PC-3 (cell line): ENCODE measurements at regions of chr17 and their contacts with region 1.

Region 1: GRCh38 chr17:12041316-12041715 is 20.6 kb downstream of the MAP2K4 start:
- DNase-seq: peak; percentile 96
- ATAC-seq: peak; percentile 84
- H3K4me3 ChIP-seq: peak overlapping the region; percentile 28
- H3K27ac ChIP-seq: peak overlapping the region; percentile 65
- H3K4me1 ChIP-seq: peaks cover 34% of the 10 kb centered on the region
- H3K27me3 ChIP-seq: no peaks in the 10 kb centered on the region
- CTCF ChIP-seq: no peak

Region 2: DNA sequence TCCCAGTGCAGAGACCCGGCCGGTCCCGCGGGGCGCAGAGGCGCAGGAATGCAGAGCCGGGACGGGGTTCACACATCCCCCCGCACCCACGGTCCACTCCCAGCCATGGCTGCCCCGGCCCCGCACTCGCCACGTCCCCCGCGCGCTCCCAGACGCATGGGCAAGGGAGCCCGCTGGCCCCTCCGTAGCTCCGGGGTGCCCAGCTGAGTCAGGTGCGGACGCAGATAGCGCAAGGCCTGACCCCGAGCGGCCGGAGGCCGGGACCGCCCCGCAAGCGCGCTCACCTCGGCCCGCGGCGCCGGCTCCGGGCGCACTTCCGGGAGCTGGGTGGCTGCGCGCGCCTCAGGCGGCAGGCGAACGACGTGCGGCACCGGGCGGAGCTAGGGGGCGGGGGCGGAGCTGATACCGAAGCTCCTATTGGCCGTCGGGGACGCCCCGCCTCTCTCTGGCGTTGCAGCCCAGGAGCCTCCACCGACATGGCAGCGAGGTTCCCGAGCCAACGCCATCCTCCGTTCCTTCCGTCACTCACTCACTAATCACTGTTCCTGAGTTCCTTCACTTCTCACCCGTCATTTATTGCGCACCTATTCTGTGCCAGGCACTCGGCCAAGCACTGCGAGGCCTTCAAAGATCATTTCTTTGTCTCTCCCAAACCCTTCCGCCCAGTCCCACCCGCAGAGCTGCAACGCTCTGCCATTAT is 44.0 kb before region 1 on chr17 and contains the start of gene ZNF18:
- CTCF ChIA-PET with region 1: no interaction called
- POLR2A ChIA-PET with region 1: interaction called, 3 read pairs
- intact Hi-C with region 1: loop called (anchors 5 kb)
- DNase-seq: peak; percentile 98
- ATAC-seq: peak; percentile 95
- H3K4me3 ChIP-seq: peak within 1 kb of the TSS; percentile 96
- H3K27ac ChIP-seq: peak within 1 kb of the TSS; percentile 43
- H3K4me1 ChIP-seq: peaks cover 12% of the 10 kb centered on the region
- H3K27me3 ChIP-seq: no peaks in the 10 kb centered on the region
- CTCF ChIP-seq: no peak
- total RNA-seq, gene ZNF18: 7.4 and 10.1 TPM in 2 replicates

Region 3: DNA sequence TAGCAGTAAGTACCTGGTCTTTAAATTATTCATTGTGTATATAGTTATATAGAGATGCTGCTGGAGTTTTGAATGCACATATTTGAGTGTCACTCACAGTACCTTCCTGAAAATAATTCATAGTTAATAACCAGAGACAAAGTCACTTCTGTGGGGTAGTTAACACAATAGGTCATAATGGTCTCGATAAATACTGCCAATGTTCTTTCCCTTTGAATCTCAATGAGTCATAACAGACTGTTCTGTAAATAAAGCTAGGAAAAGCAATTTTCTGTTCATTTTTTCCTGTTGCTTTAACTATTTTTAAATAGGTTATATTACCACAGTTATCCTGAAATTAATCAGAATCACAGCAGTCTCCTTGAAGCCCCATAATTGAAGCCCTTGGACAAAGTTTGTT is 66.6 kb after region 1 on chr17:
- CTCF ChIA-PET with region 1: no interaction called
- POLR2A ChIA-PET with region 1: no interaction called
- intact Hi-C with region 1: loop called (anchors 10 kb)
- DNase-seq: peak; percentile 51
- ATAC-seq: peak; percentile 70
- H3K4me3 ChIP-seq: no peak overlapping the region
- H3K27ac ChIP-seq: no peak overlapping the region
- H3K4me1 ChIP-seq: peaks cover 18% of the 10 kb centered on the region
- H3K27me3 ChIP-seq: no peaks in the 10 kb centered on the region
- CTCF ChIP-seq: no peak

Region 4: GRCh38 chr17:13017659-13018459 is 976.5 kb after region 1 on chr17 and contains the start of gene ELAC2:
- CTCF ChIA-PET with region 1: no interaction called
- POLR2A ChIA-PET with region 1: no interaction called
- intact Hi-C with region 1: loop called (anchors 5 kb)
- DNase-seq: peak; percentile 100
- ATAC-seq: peak; percentile 98
- H3K4me3 ChIP-seq: peak within 1 kb of the TSS; percentile 90
- H3K27ac ChIP-seq: peak within 1 kb of the TSS; percentile 75
- H3K4me1 ChIP-seq: peaks cover 18% of the 10 kb centered on the region; the same call in 1 of the 2 replicates
- H3K27me3 ChIP-seq: no peaks in the 10 kb centered on the region
- CTCF ChIP-seq: no peak; the same call in 1 of the 2 replicates
- total RNA-seq, gene ELAC2: 270 and 290 TPM in 2 replicates